Activated naive CD4-positive, alpha-beta T cell treated with anti-CD3 and anti-CD28 coated beads for 36 hours (primary cell): ENCODE measurements at regions of chr21 and their contacts with region 1.

Region 1: DNA sequence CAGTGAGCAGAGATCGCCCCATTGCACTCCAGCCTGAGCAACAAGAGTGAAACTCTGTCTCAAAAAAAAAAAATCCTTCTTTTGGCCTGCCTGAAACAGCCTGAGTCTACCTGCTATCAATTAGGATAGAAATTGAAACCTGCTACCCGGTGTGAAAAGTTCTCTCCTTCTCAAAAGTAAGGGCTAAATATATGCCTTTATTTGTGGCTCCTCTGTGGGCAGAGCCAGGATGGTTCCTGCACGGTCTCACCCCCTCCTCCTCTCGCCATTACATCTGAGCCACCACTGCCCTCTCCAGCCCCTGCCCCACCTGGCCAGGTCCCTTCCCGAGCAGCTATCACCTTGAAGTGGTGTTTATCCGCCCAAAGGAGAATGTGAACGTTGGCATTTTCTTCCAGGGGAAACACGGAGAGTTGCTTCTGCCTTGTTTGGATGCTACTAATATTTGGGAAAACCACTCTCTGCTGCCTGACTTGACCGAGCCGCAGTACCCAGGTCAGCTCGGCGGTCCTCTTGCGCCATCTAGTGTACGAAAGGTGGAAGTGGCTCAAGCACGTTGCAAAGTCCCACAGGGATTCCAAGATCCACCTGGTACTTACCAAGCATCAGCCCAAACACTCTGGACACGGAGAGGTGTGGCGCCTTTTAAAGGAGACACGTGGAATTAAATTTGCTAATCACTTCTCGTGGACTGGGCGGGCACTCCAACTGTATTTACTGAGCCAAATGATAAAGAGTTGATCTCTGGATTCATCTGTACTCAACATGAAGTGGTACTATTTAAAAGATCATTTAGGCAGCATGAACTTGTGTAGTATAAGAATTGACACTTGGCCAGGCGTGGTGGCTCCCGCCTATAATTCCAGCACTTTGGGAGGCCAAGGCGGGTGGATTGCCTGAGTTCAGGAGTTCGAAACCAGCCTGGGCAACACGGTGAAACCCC is 31.9 kb downstream of the SETD4 start:
- DNase-seq: peak; percentile 78
- H3K4me3 Mint-ChIP-seq: no peak overlapping the region
- H3K27ac Mint-ChIP-seq: no peak overlapping the region
- H3K4me1 Mint-ChIP-seq: peaks cover 5% of the 10 kb centered on the region
- H3K27me3 Mint-ChIP-seq: no peaks in the 10 kb centered on the region

Region 2: GRCh38 chr21:34693192-34693810 is 1335.1 kb before region 1 on chr21:
- CTCF ChIA-PET with region 1: interaction called, 3 read pairs
- intact Hi-C with region 1: loop called (anchors 5 kb)
- DNase-seq: peak; percentile 69
- H3K4me3 Mint-ChIP-seq: no peak overlapping the region
- H3K27ac Mint-ChIP-seq: no peak overlapping the region
- H3K4me1 Mint-ChIP-seq: no peaks in the 10 kb centered on the region
- H3K27me3 Mint-ChIP-seq: peaks cover 13% of the 10 kb centered on the region

Region 3: DNA sequence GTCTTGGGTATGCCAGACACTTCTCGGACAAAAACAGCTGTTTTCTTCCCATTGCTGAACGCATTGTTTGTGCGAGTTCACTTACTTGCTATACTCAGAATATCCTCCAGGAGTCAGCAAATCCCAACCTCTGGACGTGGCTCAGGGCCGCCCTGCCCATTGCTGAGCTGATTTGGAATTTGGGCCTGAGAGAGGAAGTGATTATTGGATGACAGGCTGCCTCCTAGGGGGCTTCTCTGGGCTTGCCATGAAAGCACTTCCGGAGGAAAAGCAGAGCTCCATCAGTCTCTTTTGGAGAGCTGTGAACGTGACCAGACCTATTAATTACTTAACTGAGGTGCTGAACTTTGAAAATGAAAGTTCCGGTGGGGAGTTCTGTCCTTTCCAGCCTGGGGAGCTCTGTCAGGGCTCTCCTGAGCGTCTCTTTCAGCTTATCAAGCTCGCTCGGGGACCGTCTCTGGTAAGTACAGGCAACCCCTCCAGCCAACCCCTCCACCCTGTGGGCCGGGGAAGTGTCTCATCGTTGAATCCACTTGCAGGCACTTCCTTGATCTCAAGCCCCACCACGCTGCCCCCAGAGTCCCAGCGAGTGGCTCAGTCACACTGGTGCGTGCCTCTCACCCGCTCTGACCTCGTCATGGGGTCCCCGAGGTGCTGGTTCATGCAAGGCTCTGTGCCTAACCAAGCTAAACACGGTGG is 1282.7 kb before region 1 on chr21:
- CTCF ChIA-PET with region 1: interaction called, 8 read pairs
- intact Hi-C with region 1: loop called (anchors 2 kb)
- DNase-seq: peak; percentile 74
- H3K4me3 Mint-ChIP-seq: peak overlapping the region; percentile 47
- H3K27ac Mint-ChIP-seq: peak overlapping the region; percentile 54
- H3K4me1 Mint-ChIP-seq: peaks cover 4% of the 10 kb centered on the region
- H3K27me3 Mint-ChIP-seq: no peaks in the 10 kb centered on the region

Region 4: DNA sequence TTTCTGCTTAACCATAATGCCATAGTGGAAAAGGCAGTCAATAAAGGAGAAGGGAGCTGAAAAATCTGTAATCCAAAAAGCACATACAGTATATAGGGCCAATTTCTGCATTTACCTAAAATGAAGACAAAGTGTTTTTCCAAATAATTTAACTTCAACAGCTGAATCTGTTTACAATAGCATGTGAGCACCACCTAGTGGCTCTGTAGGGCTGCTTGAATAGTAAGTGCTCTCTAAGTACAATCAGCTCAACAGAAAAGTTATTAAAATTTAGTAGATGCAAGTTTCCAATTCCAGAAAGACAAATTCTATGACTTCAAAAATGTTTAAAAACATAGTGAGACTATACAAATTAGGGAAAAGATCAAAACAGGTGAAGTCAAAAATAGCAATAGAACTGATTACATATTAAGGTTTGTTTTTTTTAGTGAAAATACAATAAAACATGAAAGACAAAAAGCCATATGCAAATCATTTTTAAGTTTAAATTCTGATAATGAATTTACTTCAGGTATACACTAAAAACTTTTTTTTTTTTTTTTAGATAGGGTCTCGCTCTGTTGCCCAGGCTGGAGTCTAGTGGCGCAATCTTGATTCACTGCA is 188.1 kb before region 1 on chr21:
- CTCF ChIA-PET with region 1: interaction called, 18 read pairs
- intact Hi-C with region 1: loop called (anchors 5 kb)
- DNase-seq: peak; percentile 74
- H3K4me3 Mint-ChIP-seq: no peak overlapping the region
- H3K27ac Mint-ChIP-seq: no peak overlapping the region
- H3K4me1 Mint-ChIP-seq: peaks cover 3% of the 10 kb centered on the region
- H3K27me3 Mint-ChIP-seq: no peaks in the 10 kb centered on the region

Region 5: GRCh38 chr21:35940074-35940927 is 88.1 kb before region 1 on chr21:
- CTCF ChIA-PET with region 1: no interaction called
- intact Hi-C with region 1: loop called (anchors 10 kb)
- DNase-seq: peak; percentile 29
- H3K4me3 Mint-ChIP-seq: no peak overlapping the region
- H3K27ac Mint-ChIP-seq: no peak overlapping the region
- H3K4me1 Mint-ChIP-seq: no peaks in the 10 kb centered on the region
- H3K27me3 Mint-ChIP-seq: no peaks in the 10 kb centered on the region

Region 6: GRCh38 chr21:36113647-36114428 is 85.4 kb after region 1 on chr21:
- CTCF ChIA-PET with region 1: interaction called, 6 read pairs
- intact Hi-C with region 1: loop called (anchors 1 kb)
- DNase-seq: peak; percentile 33
- H3K4me3 Mint-ChIP-seq: peak overlapping the region; percentile 76
- H3K27ac Mint-ChIP-seq: peak overlapping the region; percentile 51
- H3K4me1 Mint-ChIP-seq: peaks cover 21% of the 10 kb centered on the region
- H3K27me3 Mint-ChIP-seq: no peaks in the 10 kb centered on the region